ENCODE measurements at regions of chr3 and their contacts with region 1.

Region 1: DNA sequence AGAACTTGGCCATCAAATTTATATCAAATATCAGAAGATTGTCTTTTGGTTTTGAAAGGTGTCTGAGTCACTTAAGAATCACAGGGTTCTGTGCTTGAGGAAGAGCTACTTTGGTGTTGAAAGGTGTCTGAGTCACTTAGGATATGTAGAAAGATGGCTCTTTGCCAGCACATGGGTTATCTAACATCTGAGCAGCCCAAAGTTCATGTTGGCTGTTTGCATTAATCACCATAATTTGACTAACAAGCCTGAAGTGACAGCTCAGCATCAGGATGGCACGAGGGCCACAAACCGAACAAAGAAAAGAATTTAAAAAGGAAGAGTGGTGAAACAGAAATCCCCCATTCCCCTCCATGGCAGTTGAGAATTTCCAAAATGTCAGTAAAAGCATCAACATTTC is 190.5 kb upstream of the CMC1 start:
- DNase-seq: peak; percentile 68
- H3K4me3 Mint-ChIP-seq: no peak overlapping the region
- H3K27ac Mint-ChIP-seq: no peak overlapping the region
- H3K4me1 Mint-ChIP-seq: peaks cover 19% of the 10 kb centered on the region
- H3K27me3 Mint-ChIP-seq: peaks cover 6% of the 10 kb centered on the region

Region 2: DNA sequence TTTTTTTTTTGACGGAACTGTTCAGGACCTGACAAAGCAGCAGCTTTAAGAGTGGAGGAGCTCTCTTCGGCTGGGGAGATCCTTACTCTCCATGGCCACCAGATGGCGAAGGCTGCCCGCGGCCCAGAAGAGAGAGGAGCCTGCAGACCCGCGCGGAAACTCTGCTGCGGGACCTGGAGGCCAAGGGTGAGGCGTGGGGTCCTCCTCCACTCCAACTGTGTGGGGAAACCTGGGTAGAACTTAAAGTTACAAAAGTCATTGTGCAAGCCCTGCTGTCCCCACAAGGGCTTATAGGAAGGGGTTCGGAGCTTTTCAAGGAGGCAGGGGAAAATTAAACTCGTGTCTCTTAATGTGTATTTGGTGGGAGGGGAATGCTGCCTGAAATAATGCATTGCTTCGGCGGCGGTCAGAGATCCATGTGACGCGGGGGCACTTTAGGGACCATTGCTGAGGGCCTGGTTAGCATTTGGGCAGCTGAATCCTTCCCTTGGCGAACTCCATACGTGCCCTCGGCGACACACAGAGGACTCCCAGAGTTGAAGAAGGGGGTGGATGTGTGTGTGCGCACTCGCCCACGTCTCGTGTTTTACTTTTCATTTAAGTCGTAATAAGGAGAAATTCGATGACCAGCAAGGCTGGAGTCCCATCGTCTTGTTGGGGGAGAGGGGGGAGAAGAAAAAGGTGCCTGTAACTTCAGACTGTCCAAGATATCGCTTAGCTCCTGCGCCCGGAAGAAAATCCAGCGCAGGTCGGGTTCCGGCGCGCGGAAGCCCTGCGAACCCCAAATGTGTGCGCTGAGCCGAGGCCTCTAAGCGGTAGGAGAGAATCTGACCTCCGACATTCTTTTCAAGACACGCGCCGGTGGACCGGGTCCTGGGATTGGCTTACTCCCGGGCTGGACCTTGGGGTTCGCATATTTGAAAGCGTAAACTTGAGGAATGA is 338.5 kb before region 1 on chr3:
- CTCF ChIA-PET with region 1: no interaction called
- intact Hi-C with region 1: loop called (anchors 2 kb)
- DNase-seq: peak; percentile 81
- H3K4me3 Mint-ChIP-seq: peak overlapping the region; percentile 93
- H3K27ac Mint-ChIP-seq: no peak overlapping the region
- H3K4me1 Mint-ChIP-seq: peaks cover 19% of the 10 kb centered on the region
- H3K27me3 Mint-ChIP-seq: peaks cover 49% of the 10 kb centered on the region

Region 3: GRCh38 chr3:27880969-27881892 is 169.7 kb before region 1 on chr3:
- CTCF ChIA-PET with region 1: no interaction called
- intact Hi-C with region 1: loop called (anchors 5 kb)
- DNase-seq: peak; percentile 41
- H3K4me3 Mint-ChIP-seq: peak overlapping the region; percentile 73
- H3K27ac Mint-ChIP-seq: peak overlapping the region; percentile 78
- H3K4me1 Mint-ChIP-seq: peaks cover 63% of the 10 kb centered on the region
- H3K27me3 Mint-ChIP-seq: no peaks in the 10 kb centered on the region

Region 4: GRCh38 chr3:27943106-27943505 is 107.8 kb before region 1 on chr3:
- CTCF ChIA-PET with region 1: no interaction called
- intact Hi-C with region 1: no loop called
- DNase-seq: peak; percentile 34
- H3K4me3 Mint-ChIP-seq: no peak overlapping the region
- H3K27ac Mint-ChIP-seq: no peak overlapping the region
- H3K4me1 Mint-ChIP-seq: peaks cover 2% of the 10 kb centered on the region
- H3K27me3 Mint-ChIP-seq: no peaks in the 10 kb centered on the region

Region 5: GRCh38 chr3:27960133-27960532 is 90.8 kb before region 1 on chr3:
- CTCF ChIA-PET with region 1: no interaction called
- intact Hi-C with region 1: loop called (anchors 1 kb)
- DNase-seq: no peak
- H3K4me3 Mint-ChIP-seq: no peak overlapping the region
- H3K27ac Mint-ChIP-seq: no peak overlapping the region
- H3K4me1 Mint-ChIP-seq: peaks cover 14% of the 10 kb centered on the region
- H3K27me3 Mint-ChIP-seq: no peaks in the 10 kb centered on the region

Region 6: GRCh38 chr3:28241221-28242160 is 190.6 kb after region 1 on chr3 and contains the start of gene CMC1:
- CTCF ChIA-PET with region 1: no interaction called
- intact Hi-C with region 1: loop called (anchors 1 kb)
- DNase-seq: peak; percentile 97
- H3K4me3 Mint-ChIP-seq: peak within 1 kb of the TSS; percentile 88
- H3K27ac Mint-ChIP-seq: peak within 1 kb of the TSS; percentile 90
- H3K4me1 Mint-ChIP-seq: peaks cover 45% of the 10 kb centered on the region
- H3K27me3 Mint-ChIP-seq: no peaks in the 10 kb centered on the region
- total RNA-seq, gene CMC1: 27.6 to 28.6 TPM

Region 7: GRCh38 chr3:28348629-28349483 is 298.0 kb after region 1 on chr3 and contains the starts of genes AZI2 and ZCWPW2:
- CTCF ChIA-PET with region 1: no interaction called
- intact Hi-C with region 1: loop called (anchors 1 kb)
- DNase-seq: peak; percentile 93
- H3K4me3 Mint-ChIP-seq: peak within 1 kb of the TSS; percentile 88
- H3K27ac Mint-ChIP-seq: peak within 1 kb of the TSS; percentile 92
- H3K4me1 Mint-ChIP-seq: peaks cover 36% of the 10 kb centered on the region
- H3K27me3 Mint-ChIP-seq: no peaks in the 10 kb centered on the region
- total RNA-seq, gene AZI2: 31.5 to 39.4 TPM
- total RNA-seq, gene ZCWPW2: 0.17 TPM in 1 of 2 experiments, not detected in the other

Measured in activated naive CD4-positive, alpha-beta T cell treated with anti-CD3 and anti-CD28 coated beads for 36 hours (primary cell).